Gastrocnemius medialis (tissue), 4 donors: ENCODE measurements at regions of chr7 and their contacts with region 1.

Region 1: DNA sequence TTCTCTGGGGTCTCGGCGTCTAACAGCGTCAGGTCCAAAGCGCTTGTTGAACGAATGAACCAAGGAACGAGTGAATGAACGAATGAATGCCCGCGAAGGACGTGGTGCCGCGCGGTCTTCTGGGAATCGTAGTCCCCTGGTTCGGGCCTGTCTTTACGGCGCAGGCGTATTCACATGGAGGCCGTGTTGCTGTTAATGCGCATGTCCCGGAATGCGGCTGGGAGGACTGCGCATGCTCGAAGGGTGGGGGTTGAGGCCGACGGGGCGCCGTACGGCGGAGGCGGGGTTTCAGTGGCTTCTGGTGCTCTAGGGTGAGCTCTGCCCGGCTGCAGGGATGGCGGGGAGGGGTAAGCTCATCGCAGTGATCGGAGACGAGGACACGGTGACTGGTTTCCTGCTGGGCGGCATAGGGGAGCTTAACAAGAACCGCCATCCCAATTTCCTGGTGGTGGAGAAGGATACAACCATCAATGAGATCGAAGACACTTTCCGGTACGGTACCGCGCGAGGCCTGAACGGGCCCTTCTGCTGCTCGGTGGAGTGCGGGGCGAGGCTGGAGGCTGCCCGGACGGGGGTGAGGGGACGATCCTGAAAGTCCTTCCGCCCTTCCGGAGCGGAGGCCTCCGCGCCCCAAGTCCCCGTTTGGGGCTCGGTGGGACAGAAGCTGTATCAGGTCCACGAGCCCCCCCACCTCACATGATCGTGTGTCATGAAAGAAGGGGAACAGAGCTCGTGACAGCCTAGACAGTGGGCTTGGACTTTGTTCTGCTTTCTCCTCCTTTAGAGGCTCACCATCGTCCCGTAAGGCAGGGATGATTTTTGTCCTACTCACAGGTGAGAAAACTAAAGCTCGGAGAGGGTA is at the start of gene ATP6V1F:
- DNase-seq: peak; percentile 95 to 97
- ATAC-seq: peak; percentile 68 to 85
- H3K4me3 ChIP-seq: peak within 1 kb of the TSS; percentile 72 to 88 (median 79)
- H3K27ac ChIP-seq: peak within 1 kb of the TSS; percentile 82 to 91 (median 84)
- H3K4me1 ChIP-seq: peaks cover 31 to 45% of the 10 kb centered on the region in 2 donors
- H3K27me3 ChIP-seq: no peaks in the 10 kb centered on the region
- CTCF ChIP-seq: peak in 2 of 5 experiments; percentile 26 to 40
- POLR2A ChIP-seq: peak; percentile 76 to 84
- total RNA-seq, gene ATP6V1F: 79.3 to 99.2 (median 82.3) TPM

Region 2: DNA sequence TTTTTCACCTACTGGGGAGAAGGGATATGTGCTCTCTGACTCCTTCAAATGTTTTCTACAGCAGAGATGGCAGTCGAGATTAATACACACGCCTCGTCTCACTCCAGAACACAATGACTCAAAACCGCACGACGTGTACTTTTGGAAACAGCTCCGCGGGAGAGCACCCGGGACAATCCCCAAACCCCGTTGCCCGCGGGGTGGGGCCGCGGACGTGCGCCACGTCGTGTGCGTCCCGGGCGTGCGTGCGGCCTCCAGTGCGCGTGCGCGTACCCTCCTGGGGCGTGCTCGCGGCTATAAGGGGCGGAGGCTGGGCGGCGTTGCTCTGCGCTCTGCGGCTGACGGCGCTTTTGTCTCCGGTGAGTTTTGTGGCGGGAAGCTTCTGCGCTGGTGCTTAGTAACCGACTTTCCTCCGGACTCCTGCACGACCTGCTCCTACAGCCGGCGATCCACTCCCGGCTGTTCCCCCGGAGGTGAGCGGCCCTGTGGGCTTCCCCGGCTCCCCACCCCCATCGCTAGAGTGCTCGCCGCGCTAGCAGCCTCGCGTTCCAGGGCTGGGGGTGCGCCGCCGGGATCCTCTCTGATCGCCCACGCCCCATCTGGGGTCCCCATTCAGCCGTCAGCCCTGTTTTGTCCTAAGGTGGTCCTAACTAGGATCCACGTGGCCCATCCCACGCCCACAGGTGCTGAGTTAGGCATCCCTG is 407.1 kb before region 1 on chr7 and contains the start of gene HILPDA:
- in situ Hi-C with region 1: loop called in 1 of 4 experiments (anchors 25 kb)
- intact Hi-C with region 1: no loop called
- DNase-seq: peak; percentile 83 to 92
- ATAC-seq: peak; percentile 84 to 92
- H3K4me3 ChIP-seq: peak within 1 kb of the TSS; percentile 71 to 89 (median 84)
- H3K27ac ChIP-seq: peak within 1 kb of the TSS; percentile 83 to 92 (median 88)
- H3K4me1 ChIP-seq: peaks cover 20 to 22% of the 10 kb centered on the region in 2 donors
- H3K27me3 ChIP-seq: no peaks in the 10 kb centered on the region
- CTCF ChIP-seq: no peak
- POLR2A ChIP-seq: peak; percentile 66 to 80
- total RNA-seq, gene HILPDA: 1.1 to 4.3 (median 3.2) TPM

Region 3: DNA sequence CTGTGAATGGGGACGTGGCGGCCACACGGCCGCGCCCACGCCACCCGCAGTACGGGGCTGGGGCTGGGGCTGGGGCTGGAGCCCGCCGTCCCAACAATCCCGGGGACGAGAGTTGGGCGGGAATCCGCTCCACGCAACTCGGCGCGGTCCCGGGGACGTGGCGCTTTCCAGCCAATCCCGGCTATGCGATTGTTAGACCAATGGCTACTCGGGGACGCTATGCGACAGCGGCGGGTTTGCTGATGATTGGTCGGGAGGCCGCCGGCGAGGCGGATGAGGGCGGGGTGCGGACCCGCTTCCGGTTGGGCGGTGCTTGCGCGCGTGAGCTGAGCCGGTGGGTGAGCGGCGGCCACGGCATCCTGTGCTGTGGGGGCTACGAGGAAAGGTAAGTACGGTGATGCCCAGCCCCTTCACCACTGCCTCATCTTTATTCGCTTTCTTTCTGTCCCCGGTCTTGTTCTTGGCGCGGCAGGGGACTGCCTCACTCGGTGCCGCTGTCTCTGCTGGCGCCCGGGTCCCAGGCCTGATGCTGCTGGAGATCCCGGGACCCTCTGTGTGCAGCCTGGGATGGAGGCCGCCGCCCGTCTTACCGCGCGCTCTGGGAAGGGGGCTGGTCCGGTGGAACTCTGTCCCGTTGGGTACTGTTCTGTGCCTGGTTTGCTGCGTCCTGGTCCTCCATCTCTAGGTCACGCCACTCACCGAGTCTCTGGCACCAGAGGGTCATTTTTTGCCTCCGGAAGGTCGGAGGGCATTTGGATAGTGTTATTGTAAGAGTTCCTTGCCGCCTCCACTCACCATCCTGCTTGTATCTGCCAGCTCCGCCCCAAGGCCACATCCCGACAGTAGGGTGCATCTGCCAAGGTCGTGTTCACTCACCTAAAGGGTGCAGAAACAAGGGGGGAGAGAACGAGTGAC is 123.5 kb before region 1 on chr7 and contains the start of gene CALU:
- in situ Hi-C with region 1: loop called in 1 of 4 experiments (anchors 10 kb)
- intact Hi-C with region 1: loop called (anchors 5 kb)
- DNase-seq: peak; percentile 97 to 98
- ATAC-seq: peak; percentile 96 to 97
- H3K4me3 ChIP-seq: peak within 1 kb of the TSS; percentile 82 to 100 (median 91)
- H3K27ac ChIP-seq: peak within 1 kb of the TSS; percentile 92 to 99 (median 95)
- H3K4me1 ChIP-seq: peaks cover 35 to 40% of the 10 kb centered on the region in 2 donors
- H3K27me3 ChIP-seq: no peaks in the 10 kb centered on the region
- CTCF ChIP-seq: no peak
- POLR2A ChIP-seq: peak; percentile 95 to 97
- total RNA-seq, gene CALU: 40.1 to 115 (median 90.6) TPM

Region 4: DNA sequence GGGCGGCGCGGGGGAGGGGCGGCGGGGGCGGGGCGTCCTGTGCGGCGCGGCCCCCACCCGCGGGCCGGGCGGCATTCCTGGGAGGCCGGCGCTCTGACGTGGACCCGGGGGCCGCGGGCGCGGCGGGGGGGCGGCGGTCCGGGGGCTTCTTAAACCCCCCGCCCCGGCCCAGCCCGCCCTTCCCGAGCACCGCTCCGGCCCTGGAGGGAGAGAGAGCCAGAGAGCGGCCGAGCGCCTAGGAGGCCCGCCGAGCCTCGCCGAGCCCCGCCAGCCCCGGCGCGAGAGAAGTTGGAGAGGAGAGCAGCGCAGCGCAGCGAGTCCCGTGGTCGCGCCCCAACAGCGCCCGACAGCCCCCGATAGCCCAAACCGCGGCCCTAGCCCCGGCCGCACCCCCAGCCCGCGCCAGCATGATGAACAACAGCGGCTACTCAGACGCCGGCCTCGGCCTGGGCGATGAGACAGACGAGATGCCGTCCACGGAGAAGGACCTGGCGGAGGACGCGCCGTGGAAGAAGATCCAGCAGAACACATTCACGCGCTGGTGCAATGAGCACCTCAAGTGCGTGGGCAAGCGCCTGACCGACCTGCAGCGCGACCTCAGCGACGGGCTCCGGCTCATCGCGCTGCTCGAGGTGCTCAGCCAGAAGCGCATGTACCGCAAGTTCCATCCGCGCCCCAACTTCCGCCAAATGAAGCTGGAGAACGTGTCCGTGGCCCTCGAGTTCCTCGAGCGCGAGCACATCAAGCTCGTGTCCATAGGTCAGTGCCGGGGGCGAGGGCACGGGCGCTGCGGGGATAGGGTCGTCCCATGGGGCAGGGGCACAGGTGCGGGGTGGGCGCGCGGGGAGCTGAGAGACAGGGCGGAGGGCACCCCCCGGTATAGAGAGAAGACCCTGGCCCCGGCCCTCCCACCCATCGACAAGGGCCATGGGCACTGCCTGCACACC is 32.3 kb before region 1 on chr7 and contains the start of gene FLNC:
- in situ Hi-C with region 1: no loop called
- intact Hi-C with region 1: loop called (anchors 2 kb)
- DNase-seq: peak in 1 of 2 donors; percentile 80
- ATAC-seq: peak in 1 of 2 donors; percentile 1
- H3K4me3 ChIP-seq: peak within 1 kb of the TSS; percentile 69 to 92 (median 84)
- H3K27ac ChIP-seq: peak within 1 kb of the TSS; percentile 92 to 99 (median 98)
- H3K4me1 ChIP-seq: peaks cover 58 to 80% of the 10 kb centered on the region in 2 donors
- H3K27me3 ChIP-seq: no peaks in the 10 kb centered on the region
- CTCF ChIP-seq: no peak
- POLR2A ChIP-seq: peak; percentile 93 to 96
- total RNA-seq, gene FLNC: 1,071 to 4,398 (median 2,381) TPM

Region 5: DNA sequence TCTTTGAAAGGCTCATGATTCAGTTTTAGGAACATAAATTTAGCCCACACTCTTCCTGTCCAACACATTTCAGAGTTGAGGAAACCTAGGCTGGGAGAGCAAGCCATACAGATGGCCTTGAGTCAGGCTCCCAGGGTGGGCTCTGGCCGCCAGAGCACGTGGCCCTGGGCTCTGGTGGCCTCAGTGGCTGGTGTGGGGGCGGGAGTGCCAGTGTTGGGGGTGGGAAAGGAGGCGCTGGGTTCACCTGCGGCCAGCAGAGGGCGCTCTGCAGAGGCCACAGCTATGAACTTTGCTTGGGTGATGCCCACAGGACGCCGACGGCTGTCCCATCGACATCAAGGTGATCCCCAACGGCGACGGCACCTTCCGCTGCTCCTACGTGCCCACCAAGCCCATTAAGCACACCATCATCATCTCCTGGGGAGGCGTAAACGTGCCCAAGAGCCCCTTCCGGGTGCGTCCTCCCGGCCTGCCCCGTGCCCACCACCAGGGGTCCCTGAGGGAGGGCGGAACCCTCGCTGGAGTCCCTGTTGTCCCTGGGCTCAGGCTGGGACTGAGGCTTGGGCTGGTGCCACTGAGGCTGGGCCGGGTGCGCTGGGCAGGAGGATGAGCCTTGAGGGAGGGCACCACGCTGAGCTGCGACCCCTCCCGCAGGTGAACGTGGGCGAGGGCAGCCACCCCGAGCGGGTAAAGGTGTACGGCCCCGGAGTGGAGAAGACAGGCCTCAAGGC is 20.7 kb before region 1 on chr7:
- in situ Hi-C with region 1: no loop called
- intact Hi-C with region 1: loop called (anchors 2 kb)
- DNase-seq: peak in 1 of 2 donors; percentile 83
- ATAC-seq: peak; percentile 10 to 15
- H3K4me3 ChIP-seq: no peak overlapping the region
- H3K27ac ChIP-seq: peak overlapping the region; percentile 92 to 99 (median 98)
- H3K4me1 ChIP-seq: peaks cover 21 to 32% of the 10 kb centered on the region in 2 donors
- H3K27me3 ChIP-seq: no peaks in the 10 kb centered on the region
- CTCF ChIP-seq: peak; percentile 51 to 89 (median 85)
- POLR2A ChIP-seq: peak in 1 of 2 donors; percentile 6

Region 6: GRCh38 chr7:128914566-128915151 is 51.9 kb after region 1 on chr7:
- in situ Hi-C with region 1: no loop called
- intact Hi-C with region 1: no loop called
- DNase-seq: no peak
- ATAC-seq: no peak
- H3K4me3 ChIP-seq: no peak overlapping the region
- H3K27ac ChIP-seq: no peak overlapping the region
- H3K4me1 ChIP-seq: peaks cover 0 to 9% of the 10 kb centered on the region in 2 donors
- H3K27me3 ChIP-seq: peaks cover 13 to 50% (median 43%) of the 10 kb centered on the region in 3 donors
- CTCF ChIP-seq: no peak
- POLR2A ChIP-seq: no peak

Region 7: DNA sequence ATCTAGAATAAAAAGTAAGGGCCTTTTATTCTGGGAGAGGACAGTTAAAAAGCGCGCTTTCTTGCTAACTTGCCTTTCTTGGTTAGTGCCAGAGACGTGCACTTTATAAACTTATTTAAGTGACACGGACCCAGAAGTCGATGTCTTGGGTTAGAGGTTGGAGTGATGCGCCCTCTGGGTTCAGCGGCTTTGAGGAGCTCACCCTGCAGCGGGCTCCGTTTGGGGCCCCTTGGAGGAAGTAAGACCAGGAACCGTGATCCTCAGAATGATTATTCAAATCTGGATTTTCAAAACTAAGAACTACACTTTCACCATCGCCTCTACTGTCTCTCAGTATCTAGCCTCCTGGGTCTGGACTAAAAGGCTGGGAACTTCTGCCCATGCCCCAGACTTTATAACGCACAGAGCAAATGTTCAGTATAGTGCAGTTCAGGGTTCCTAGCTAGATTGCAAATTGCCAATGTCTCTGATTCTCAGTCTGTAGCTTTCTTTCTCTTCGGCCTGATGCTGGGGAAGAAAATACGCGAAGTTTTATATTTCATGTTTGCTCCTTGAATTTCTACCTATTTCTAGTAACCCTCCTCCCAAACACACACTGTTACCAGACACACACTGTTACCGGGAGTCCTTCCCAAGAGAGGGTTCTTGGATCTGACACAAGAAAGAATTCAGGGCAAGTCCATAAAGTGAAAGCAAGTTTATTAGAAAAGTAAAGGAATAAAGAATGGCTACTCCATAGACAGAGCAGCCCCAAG is 307.1 kb after region 1 on chr7:
- in situ Hi-C with region 1: no loop called
- intact Hi-C with region 1: no loop called
- DNase-seq: no peak
- ATAC-seq: no peak
- H3K4me3 ChIP-seq: peak overlapping the region; percentile 44 to 48 (median 46)
- H3K27ac ChIP-seq: no peak overlapping the region
- H3K4me1 ChIP-seq: no peaks in the 10 kb centered on the region
- H3K27me3 ChIP-seq: no peaks in the 10 kb centered on the region
- CTCF ChIP-seq: no peak
- POLR2A ChIP-seq: no peak